Breast epithelium (tissue), 4 donors: ENCODE measurements at regions of chr14 and their contacts with region 1.

Region 1: GRCh38 chr14:27712364-27712763 is 1054.2 kb upstream of the FOXG1 start:
- DNase-seq: no peak
- H3K4me3 ChIP-seq: no peak overlapping the region
- H3K27ac ChIP-seq: no peak overlapping the region
- H3K4me1 ChIP-seq: no peaks in the 10 kb centered on the region
- H3K27me3 ChIP-seq: no peaks in the 10 kb centered on the region
- CTCF ChIP-seq: no peak
- POLR2A ChIP-seq: no peak

Region 2: GRCh38 chr14:28608851-28609828 is 896.8 kb after region 1 on chr14:
- intact Hi-C with region 1: loop called (anchors 10 kb)
- DNase-seq: peak; percentile 27 to 54
- H3K4me3 ChIP-seq: no peak overlapping the region
- H3K27ac ChIP-seq: no peak overlapping the region
- H3K4me1 ChIP-seq: no peaks in the 10 kb centered on the region
- H3K27me3 ChIP-seq: no peaks in the 10 kb centered on the region
- CTCF ChIP-seq: peak; percentile 21 to 68 (median 61)
- POLR2A ChIP-seq: no peak

Region 3: DNA sequence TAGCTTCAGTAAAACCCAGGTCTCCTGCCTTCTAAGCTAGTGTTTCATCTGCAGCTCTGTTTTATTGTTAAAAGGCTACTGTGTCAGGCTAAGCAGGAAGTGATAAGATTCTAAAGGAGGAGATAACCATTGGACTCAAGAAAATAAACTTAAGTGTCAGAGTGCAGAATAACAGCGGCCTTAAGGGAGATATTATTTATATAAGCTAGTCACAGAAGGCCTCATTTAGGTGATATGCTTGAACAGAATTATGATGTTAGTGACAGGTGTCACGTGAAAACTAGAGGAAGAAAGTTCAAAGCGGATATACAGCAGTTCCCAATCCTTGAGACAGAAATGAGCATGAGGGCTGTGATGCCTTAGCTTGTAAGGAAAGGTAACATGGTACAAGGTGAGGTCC is 1427.7 kb after region 1 on chr14:
- intact Hi-C with region 1: no loop called
- DNase-seq: no peak
- H3K4me3 ChIP-seq: no peak overlapping the region
- H3K27ac ChIP-seq: no peak overlapping the region
- H3K4me1 ChIP-seq: no peaks in the 10 kb centered on the region
- H3K27me3 ChIP-seq: no peaks in the 10 kb centered on the region
- CTCF ChIP-seq: no peak
- POLR2A ChIP-seq: no peak